ENCODE measurements at regions of chr9 and their contacts with region 1.

Region 1: DNA sequence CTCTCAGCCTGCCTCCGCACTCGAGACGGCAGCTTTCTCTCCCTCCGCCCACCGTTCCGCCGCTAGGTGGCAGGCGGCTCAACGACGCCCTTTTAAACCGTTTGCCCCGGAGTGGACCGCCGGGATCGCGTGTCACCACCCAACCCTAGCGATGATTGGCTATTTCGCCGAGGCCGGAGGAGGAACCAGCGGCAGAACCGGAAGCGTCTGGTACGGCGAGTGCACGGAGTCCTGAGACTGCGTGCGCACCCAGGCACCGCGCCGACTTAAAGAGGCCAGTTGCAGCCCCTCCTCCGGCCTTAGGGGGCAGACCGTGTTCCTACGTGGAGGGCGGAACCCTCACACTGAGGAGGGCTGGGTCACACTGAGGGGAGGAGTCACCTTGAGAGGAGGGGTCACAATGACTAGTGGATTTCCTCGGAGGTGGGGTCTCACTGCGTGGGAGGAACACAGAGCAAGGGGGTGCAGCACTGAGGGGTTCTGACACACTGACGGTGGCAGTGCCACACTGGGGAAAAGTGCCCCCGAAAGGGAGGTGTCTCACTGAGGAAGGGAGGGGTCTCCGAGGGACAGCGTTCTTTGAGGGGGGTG is 980 bp upstream of the TESK1 start:
- DNase-seq: peak; percentile 100
- ATAC-seq: peak; percentile 95 to 97 (median 96)
- H3K4me3 ChIP-seq: peak overlapping the region; percentile 43 to 96 (median 78)
- H3K27ac ChIP-seq: peak overlapping the region; percentile 62 to 99 (median 93)
- H3K4me1 ChIP-seq: peaks cover 6 to 33% (median 25%) of the 10 kb centered on the region in 12 donors
- H3K27me3 ChIP-seq: no peaks in the 10 kb centered on the region
- CTCF ChIP-seq: peak; percentile 90 to 99 (median 94)
- POLR2A ChIP-seq: peak in 1 of 2 donors; percentile 72

Region 2: DNA sequence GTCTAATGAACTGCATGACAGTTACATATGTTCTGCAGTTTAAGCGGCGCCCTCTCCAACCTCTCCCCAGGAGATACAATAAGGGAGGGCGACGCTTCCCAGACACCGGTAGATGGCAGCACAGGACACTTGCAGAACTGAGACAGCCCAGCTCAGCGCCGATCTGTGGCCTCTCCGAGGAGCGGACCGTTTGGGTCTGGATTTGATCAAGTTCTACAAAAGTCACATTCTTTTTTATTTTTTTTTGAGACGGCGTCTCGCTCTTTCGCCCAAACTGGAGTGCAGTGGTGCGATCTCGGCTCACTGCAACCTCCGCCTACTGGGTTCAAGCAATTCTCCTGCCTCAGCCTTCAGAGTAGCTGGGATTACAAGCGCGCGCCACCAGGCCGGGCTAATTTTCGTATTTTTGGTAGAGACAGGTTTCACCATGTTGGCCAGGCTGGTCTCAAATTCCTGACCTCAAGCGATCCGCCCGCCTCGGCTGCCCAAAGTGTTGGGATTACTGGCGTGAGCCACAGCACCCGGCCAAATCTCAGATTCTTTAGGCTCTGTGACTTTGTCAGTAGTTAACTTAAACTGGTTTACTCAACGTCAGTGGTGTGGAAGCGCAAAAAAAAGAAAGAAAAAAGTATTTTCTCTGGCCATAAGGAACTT is 487.1 kb before region 1 on chr9:
- intact Hi-C with region 1: loop called in 2 of 10 experiments (anchors 5 kb)
- DNase-seq: peak; percentile 92 to 95 (median 93)
- ATAC-seq: peak; percentile 74 to 81 (median 76)
- H3K4me3 ChIP-seq: peak overlapping the region in 11 of 12 donors; percentile 49 to 81 (median 65)
- H3K27ac ChIP-seq: peak overlapping the region in 11 of 12 donors; percentile 26 to 98 (median 88)
- H3K4me1 ChIP-seq: peaks cover 0 to 46% (median 34%) of the 10 kb centered on the region in 12 donors
- H3K27me3 ChIP-seq: no peaks in the 10 kb centered on the region
- CTCF ChIP-seq: peak; percentile 93 to 98 (median 95)
- POLR2A ChIP-seq: no peak

Region 3: DNA sequence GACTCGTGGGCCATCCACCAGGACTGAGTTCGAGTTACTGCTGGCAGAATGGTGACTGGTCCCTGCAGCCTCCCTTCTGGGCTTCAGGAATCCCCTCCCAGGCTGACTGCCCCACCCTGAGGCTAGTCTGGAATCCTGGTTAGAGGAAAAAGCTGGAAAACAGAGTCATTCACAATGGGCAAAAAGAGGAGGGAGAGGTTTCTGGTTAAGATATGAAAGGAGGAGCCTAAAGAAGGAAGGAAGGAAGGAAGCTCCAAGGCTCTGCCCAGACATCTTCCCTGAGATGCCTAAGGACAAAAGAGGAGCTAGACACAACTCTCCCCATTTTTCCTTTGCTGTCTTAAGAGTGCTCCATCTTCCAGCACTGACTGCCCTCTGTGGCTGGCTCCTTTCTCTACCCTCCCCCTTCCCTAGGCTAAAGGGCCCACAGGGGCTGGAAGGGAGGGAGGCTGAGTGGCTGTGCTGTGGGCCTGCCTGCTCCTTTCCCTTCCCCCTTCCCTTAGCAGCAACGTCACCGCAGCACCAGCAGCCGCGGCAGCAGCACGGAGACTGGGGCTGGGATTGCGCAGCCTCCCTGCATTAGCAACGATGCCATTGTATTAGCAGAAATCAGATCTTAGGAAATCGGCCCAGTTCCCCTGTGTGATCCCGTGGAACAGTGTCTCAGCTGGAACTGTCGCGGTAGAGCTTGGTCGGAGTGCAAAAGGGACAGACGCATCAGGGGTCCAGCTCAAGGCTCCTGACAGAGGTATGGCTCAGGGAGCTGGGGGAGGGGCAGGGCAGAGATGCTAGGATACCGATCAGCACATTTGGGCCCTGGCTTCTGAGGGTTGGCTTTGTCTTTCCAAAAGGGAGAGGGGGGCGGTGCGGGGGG is 65.5 kb before region 1 on chr9:
- intact Hi-C with region 1: loop called in 1 of 10 experiments (anchors 10 kb)
- DNase-seq: peak; percentile 75 to 84 (median 80)
- ATAC-seq: peak; percentile 81 to 90 (median 86)
- H3K4me3 ChIP-seq: peak overlapping the region; percentile 16 to 65 (median 54)
- H3K27ac ChIP-seq: peak overlapping the region; percentile 85 to 94 (median 90)
- H3K4me1 ChIP-seq: peaks cover 7 to 70% (median 59%) of the 10 kb centered on the region in 12 donors
- H3K27me3 ChIP-seq: no peaks in the 10 kb centered on the region
- CTCF ChIP-seq: no peak
- POLR2A ChIP-seq: peak in 1 of 2 donors; percentile 23

Region 4: DNA sequence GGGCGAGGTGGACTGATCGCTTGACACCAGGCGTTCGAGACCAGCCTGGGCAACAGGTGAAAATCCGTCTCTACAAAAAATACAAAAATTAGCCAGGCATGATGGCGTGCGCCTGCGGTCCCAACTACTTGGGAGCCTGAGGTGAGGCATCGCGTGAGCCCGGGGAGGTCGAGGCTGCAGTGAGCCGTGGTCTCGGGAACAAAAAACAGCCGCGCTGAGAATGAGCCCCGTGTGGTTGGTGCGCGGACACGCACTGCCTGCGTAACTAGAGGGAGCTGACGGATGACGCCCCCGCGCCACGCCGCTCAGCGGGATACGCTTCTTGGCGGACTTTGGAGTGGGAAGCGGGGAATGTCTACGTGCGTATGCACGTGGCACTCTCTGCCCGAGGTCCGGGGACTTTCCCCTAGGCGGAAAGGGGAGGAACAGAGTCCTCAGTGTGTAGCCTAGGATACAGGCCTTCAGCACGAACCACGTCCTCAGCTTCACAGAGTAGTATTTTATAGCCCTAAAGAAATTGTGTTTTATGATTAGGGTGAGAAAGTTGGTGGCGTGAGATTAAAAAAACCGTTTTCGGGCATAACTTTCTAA is 53.6 kb after region 1 on chr9 and contains the start of gene RMRP:
- intact Hi-C with region 1: loop called in 2 of 10 experiments (anchors 10 kb)
- DNase-seq: peak; percentile 98 to 99 (median 98)
- ATAC-seq: peak; percentile 94 to 97 (median 96)
- H3K4me3 ChIP-seq: peak within 1 kb of the TSS; percentile 72 to 98 (median 88)
- H3K27ac ChIP-seq: peak within 1 kb of the TSS; percentile 93 to 100 (median 97)
- H3K4me1 ChIP-seq: peaks cover 0 to 56% (median 30%) of the 10 kb centered on the region in 12 donors
- H3K27me3 ChIP-seq: no peaks in the 10 kb centered on the region
- CTCF ChIP-seq: peak in 11 of 12 donors; percentile 12 to 55 (median 32)
- POLR2A ChIP-seq: peak in 1 of 2 donors; percentile 31
- total RNA-seq, gene RMRP: 462 to 18,741 (median 5,764) TPM

Region 5: GRCh38 chr9:35675732-35676392 is 71.8 kb after region 1 on chr9:
- intact Hi-C with region 1: no loop called
- DNase-seq: peak in 3 of 5 donors; percentile 59 to 78 (median 60)
- ATAC-seq: peak in 3 of 4 donors; percentile 39 to 55 (median 47)
- H3K4me3 ChIP-seq: peak overlapping the region; percentile 27 to 65 (median 58)
- H3K27ac ChIP-seq: no peak overlapping the region
- H3K4me1 ChIP-seq: peaks cover 0 to 21% (median 11%) of the 10 kb centered on the region in 12 donors
- H3K27me3 ChIP-seq: peaks cover 0 to 8% (median 0%) of the 10 kb centered on the region in 9 donors
- CTCF ChIP-seq: peak in 2 of 12 donors; percentile 16 to 17
- POLR2A ChIP-seq: no peak